ENCODE measurements at regions of chr15 and their contacts with region 1.

Region 1: DNA sequence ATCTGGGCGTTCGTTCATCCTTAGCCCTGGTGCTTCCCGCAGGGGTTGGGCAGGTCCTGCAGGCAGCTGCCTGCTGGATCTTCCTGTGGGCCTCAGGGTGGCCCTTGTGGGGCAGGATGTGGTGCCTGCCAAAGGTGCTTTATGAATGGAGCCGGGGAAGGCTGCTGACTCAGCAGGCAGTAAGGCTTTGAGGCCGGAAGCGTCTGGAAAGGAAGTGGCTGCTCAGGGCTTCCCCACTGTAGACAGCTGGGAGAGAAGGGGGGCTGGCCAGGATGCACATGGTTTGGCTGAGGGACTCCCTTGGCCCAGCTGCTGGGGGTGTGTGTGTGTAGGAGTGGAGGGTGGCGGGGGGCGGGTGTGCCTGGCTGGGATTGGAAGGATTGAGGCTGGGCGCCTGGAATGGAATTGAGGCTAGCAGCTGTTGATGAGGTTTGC is 12.9 kb downstream of the CD276 start:
- DNase-seq: peak; percentile 49 to 88 (median 75)
- ATAC-seq: peak; percentile 93
- H3K4me3 ChIP-seq: no peak overlapping the region
- H3K4me3 Mint-ChIP-seq: no peak overlapping the region
- H3K27ac ChIP-seq: no peak overlapping the region
- H3K27ac Mint-ChIP-seq: peak overlapping the region; percentile 41
- H3K4me1 ChIP-seq: peaks cover 16% of the 10 kb centered on the region
- H3K4me1 Mint-ChIP-seq: peaks cover 19% of the 10 kb centered on the region
- H3K27me3 ChIP-seq: peaks cover 5 to 13% of the 10 kb centered on the region in 2 experiments
- H3K27me3 Mint-ChIP-seq: peaks cover 62% of the 10 kb centered on the region
- CTCF ChIP-seq: no peak

Region 2: GRCh38 chr15:73284090-73284716 is 412.8 kb before region 1 on chr15:
- CTCF ChIA-PET with region 1: interaction called, 3 read pairs
- POLR2A ChIA-PET with region 1: no interaction called
- intact Hi-C with region 1: loop called in 1 of 2 experiments (anchors 10 kb)
- DNase-seq: peak in 2 of 9 experiments; percentile 8 to 18
- ATAC-seq: no peak
- H3K4me3 ChIP-seq: no peak overlapping the region
- H3K4me3 Mint-ChIP-seq: no peak overlapping the region
- H3K27ac ChIP-seq: no peak overlapping the region
- H3K27ac Mint-ChIP-seq: no peak overlapping the region
- H3K4me1 ChIP-seq: no peaks in the 10 kb centered on the region
- H3K4me1 Mint-ChIP-seq: no peaks in the 10 kb centered on the region
- H3K27me3 ChIP-seq: no peaks in the 10 kb centered on the region
- H3K27me3 Mint-ChIP-seq: peaks cover 6% of the 10 kb centered on the region
- CTCF ChIP-seq: no peak

Region 3: GRCh38 chr15:73560501-73561117 is 136.4 kb before region 1 on chr15:
- CTCF ChIA-PET with region 1: interaction called, 5 read pairs
- POLR2A ChIA-PET with region 1: no interaction called
- intact Hi-C with region 1: loop called (anchors 1 kb)
- DNase-seq: peak in 2 of 9 experiments; percentile 56 to 66
- ATAC-seq: peak; percentile 52
- H3K4me3 ChIP-seq: no peak overlapping the region
- H3K4me3 Mint-ChIP-seq: no peak overlapping the region
- H3K27ac ChIP-seq: no peak overlapping the region
- H3K27ac Mint-ChIP-seq: no peak overlapping the region
- H3K4me1 ChIP-seq: no peaks in the 10 kb centered on the region
- H3K4me1 Mint-ChIP-seq: no peaks in the 10 kb centered on the region
- H3K27me3 ChIP-seq: no peaks in the 10 kb centered on the region
- H3K27me3 Mint-ChIP-seq: no peaks in the 10 kb centered on the region
- CTCF ChIP-seq: peak; percentile 48

Region 4: GRCh38 chr15:73677146-73677607 is 19.9 kb before region 1 on chr15:
- CTCF ChIA-PET with region 1: interaction called, 184 read pairs
- POLR2A ChIA-PET with region 1: interaction called, 4 read pairs
- intact Hi-C with region 1: loop called (anchors 1 kb)
- DNase-seq: peak; percentile 22 to 72 (median 55)
- ATAC-seq: no peak
- H3K4me3 ChIP-seq: no peak overlapping the region
- H3K4me3 Mint-ChIP-seq: no peak overlapping the region
- H3K27ac ChIP-seq: no peak overlapping the region
- H3K27ac Mint-ChIP-seq: no peak overlapping the region
- H3K4me1 ChIP-seq: no peaks in the 10 kb centered on the region
- H3K4me1 Mint-ChIP-seq: no peaks in the 10 kb centered on the region
- H3K27me3 ChIP-seq: peaks cover 0 to 9% of the 10 kb centered on the region in 2 experiments
- H3K27me3 Mint-ChIP-seq: peaks cover 34% of the 10 kb centered on the region
- CTCF ChIP-seq: peak; percentile 81

Region 5: GRCh38 chr15:73683777-73684580 is 13.1 kb before region 1 on chr15 and contains the start of gene CD276:
- CTCF ChIA-PET with region 1: interaction called, 184 read pairs
- POLR2A ChIA-PET with region 1: interaction called, 4 read pairs
- intact Hi-C with region 1: no loop called
- DNase-seq: no peak
- ATAC-seq: no peak
- H3K4me3 ChIP-seq: no peak within 1 kb of the TSS
- H3K4me3 Mint-ChIP-seq: peak within 1 kb of the TSS; percentile 64
- H3K27ac ChIP-seq: no peak within 1 kb of the TSS
- H3K27ac Mint-ChIP-seq: no peak within 1 kb of the TSS
- H3K4me1 ChIP-seq: peaks cover 13% of the 10 kb centered on the region
- H3K4me1 Mint-ChIP-seq: peaks cover 8% of the 10 kb centered on the region
- H3K27me3 ChIP-seq: peaks cover 21 to 24% of the 10 kb centered on the region in 2 experiments
- H3K27me3 Mint-ChIP-seq: peaks cover 61% of the 10 kb centered on the region
- CTCF ChIP-seq: no peak
- total RNA-seq, gene CD276: not detected

Measured in CD8-positive, alpha-beta T cell (primary cell).